ENCODE measurements at regions of chr15 and their contacts with region 1.

Region 1: GRCh38 chr15:64930778-64931371 is 19.2 kb downstream of the ANKDD1A start:
- DNase-seq: peak in 1 of 2 experiments; percentile 24
- H3K4me3 ChIP-seq: no peak overlapping the region
- H3K27ac ChIP-seq: no peak overlapping the region
- H3K4me1 ChIP-seq: no peaks in the 10 kb centered on the region
- H3K27me3 ChIP-seq: no peaks in the 10 kb centered on the region
- CTCF ChIP-seq: no peak

Region 2: GRCh38 chr15:64856429-64857145 is 74.3 kb before region 1 on chr15:
- CTCF ChIA-PET with region 1: no interaction called
- POLR2A ChIA-PET with region 1: no interaction called
- intact Hi-C with region 1: no loop called
- DNase-seq: no peak
- H3K4me3 ChIP-seq: no peak overlapping the region
- H3K27ac ChIP-seq: no peak overlapping the region
- H3K4me1 ChIP-seq: no peaks in the 10 kb centered on the region
- H3K27me3 ChIP-seq: no peaks in the 10 kb centered on the region
- CTCF ChIP-seq: no peak

Region 3: GRCh38 chr15:64905119-64905831 is 25.6 kb before region 1 on chr15:
- CTCF ChIA-PET with region 1: interaction called, 11 read pairs
- POLR2A ChIA-PET with region 1: no interaction called
- intact Hi-C with region 1: no loop called
- DNase-seq: peak in 1 of 2 experiments; percentile 68
- H3K4me3 ChIP-seq: peak overlapping the region; percentile 35; the same call in 1 of the 2 replicates
- H3K27ac ChIP-seq: no peak overlapping the region
- H3K4me1 ChIP-seq: no peaks in the 10 kb centered on the region
- H3K27me3 ChIP-seq: no peaks in the 10 kb centered on the region
- CTCF ChIP-seq: peak; percentile 73

Measured in PC-9 (cell line).